Breast epithelium (tissue), 4 donors: ENCODE measurements at regions of chr12 and their contacts with region 1.

Region 1: DNA sequence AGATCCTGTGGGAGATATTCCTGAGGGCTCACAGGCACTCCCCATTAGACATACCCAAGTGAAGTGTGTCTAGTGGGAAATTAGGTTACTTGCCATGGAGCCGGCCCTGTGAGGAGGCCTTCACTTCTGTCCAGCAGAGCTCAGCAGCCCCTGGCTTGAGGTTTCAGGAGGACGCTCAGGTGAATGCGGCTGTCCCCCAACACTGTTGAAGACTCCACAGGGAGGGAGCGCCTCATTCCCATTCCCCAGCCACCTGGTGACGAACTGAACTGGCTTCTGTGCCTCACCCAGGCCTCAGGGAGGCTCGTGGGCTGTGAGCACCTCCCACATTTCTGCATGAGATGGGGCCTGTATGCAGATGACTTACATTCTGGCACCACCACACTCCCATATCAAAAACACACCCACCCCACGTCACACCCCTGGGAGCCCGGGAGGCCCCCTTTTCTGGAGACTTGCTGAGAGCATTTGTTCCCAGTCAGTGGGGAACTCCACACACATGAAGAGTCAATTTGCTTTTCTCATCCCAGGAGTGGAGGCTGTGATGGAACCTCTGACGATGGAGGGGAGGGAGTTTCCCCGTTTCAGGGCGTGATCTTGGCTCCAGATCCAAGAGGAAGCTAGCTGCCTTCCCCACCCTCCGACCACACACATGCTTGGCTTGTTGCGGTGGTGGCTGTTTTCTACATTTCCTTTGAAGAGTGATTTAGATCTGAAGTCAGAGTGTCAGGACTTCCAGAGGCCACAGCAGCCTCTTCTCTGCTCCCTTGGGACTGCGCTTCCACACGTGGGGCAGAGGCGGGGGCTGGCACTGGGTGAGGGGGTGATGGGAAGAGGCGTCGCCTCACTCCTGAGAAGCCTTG is 120.7 kb downstream of the ADGRD1 start:
- DNase-seq: no peak
- H3K4me3 ChIP-seq: no peak overlapping the region
- H3K27ac ChIP-seq: peak overlapping the region in 1 of 2 donors; percentile 38
- H3K4me1 ChIP-seq: no peaks in the 10 kb centered on the region
- H3K27me3 ChIP-seq: no peaks in the 10 kb centered on the region
- CTCF ChIP-seq: no peak
- POLR2A ChIP-seq: no peak

Region 2: GRCh38 chr12:131137836-131138637 is 63.6 kb after region 1 on chr12:
- intact Hi-C with region 1: no loop called
- DNase-seq: no peak
- H3K4me3 ChIP-seq: peak overlapping the region in 1 of 3 donors; percentile 40
- H3K27ac ChIP-seq: peak overlapping the region in 1 of 2 donors; percentile 32
- H3K4me1 ChIP-seq: no peaks in the 10 kb centered on the region
- H3K27me3 ChIP-seq: peaks cover 0 to 8% of the 10 kb centered on the region in 2 donors
- CTCF ChIP-seq: no peak
- POLR2A ChIP-seq: no peak

Region 3: GRCh38 chr12:131229426-131230339 is 155.2 kb after region 1 on chr12:
- intact Hi-C with region 1: loop called (anchors 5 kb)
- DNase-seq: peak in 1 of 2 donors; percentile 20
- H3K4me3 ChIP-seq: no peak overlapping the region
- H3K27ac ChIP-seq: peak overlapping the region in 1 of 2 donors; percentile 52
- H3K4me1 ChIP-seq: no peaks in the 10 kb centered on the region
- H3K27me3 ChIP-seq: peaks cover 0 to 5% of the 10 kb centered on the region in 2 donors
- CTCF ChIP-seq: no peak
- POLR2A ChIP-seq: no peak